ENCODE measurements at regions of chr17 and their contacts with region 1.

Region 1: DNA sequence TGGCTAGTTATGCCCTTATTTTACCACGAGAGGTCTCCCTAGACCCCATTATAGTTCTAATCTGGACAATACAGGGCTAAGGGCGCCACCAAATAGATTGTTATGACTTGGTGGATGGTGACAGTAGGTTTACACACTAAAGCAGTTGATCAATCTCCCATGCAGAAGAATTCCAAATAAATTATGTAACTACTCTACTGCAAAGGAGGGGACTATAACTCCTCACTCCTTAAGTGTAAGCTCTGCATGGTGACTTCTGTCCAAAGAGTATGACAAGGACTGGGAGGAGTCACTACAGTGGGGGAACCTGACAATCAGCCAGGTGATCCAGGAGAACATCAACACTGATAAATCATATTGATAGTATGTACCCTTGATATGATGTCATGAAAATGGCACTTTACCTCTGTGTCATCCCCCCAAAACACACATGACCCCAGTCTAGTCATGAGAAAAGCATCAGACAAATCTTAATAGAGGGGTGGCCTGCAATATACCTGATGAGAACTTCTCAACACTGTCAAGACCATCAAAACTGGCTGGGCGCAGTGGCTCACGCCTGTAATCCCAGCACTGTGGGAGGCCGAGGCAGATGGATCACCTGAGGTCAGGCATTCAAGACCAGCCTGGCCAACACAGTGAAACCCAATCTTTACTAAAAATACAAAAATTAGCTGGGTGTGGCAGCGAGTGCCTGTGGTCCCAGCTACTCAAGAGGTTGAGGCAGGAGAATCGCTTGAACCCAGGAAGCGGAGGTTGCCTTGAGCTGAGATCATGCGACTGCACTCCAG is 20.1 kb upstream of the YPEL2 start:
- DNase-seq: no peak
- H3K4me3 ChIP-seq: no peak overlapping the region
- H3K27ac ChIP-seq: no peak overlapping the region
- H3K4me1 ChIP-seq: peaks cover 0 to 10% (median 5%) of the 10 kb centered on the region in 6 donors
- H3K27me3 ChIP-seq: no peaks in the 10 kb centered on the region
- CTCF ChIP-seq: peak in 10 of 11 experiments; percentile 11 to 96 (median 90)
- POLR2A ChIP-seq: no peak

Region 2: DNA sequence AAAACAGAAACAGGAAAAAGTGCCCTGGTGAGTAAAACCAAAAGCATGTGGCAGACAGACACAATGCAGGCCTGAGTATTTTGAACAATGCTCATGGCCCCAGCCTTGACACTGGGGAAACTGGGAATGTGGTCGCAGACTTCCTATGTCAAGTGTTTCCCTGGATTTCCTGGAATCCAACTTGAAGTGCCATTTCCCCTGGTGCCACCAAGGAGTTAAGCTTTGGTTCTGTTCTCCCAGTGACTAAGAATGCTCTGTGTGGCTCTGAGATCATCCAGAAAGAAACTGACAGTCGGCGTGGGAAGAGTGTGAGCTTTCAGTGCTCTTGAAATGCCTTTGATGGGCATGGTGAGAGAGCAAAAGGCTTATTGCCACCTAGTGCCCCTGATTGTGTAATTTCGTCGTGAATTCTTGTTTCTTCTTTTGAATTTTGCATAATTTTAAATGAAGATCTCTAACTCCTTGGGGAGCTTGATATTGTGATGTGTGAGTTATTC is 116.1 kb after region 1 on chr17:
- intact Hi-C with region 1: no loop called
- DNase-seq: no peak
- H3K4me3 ChIP-seq: no peak overlapping the region
- H3K27ac ChIP-seq: peak overlapping the region in 7 of 8 donors; percentile 61 to 72 (median 70)
- H3K4me1 ChIP-seq: peaks cover 10 to 68% (median 35%) of the 10 kb centered on the region in 6 donors
- H3K27me3 ChIP-seq: no peaks in the 10 kb centered on the region
- CTCF ChIP-seq: no peak
- POLR2A ChIP-seq: no peak

Region 3: DNA sequence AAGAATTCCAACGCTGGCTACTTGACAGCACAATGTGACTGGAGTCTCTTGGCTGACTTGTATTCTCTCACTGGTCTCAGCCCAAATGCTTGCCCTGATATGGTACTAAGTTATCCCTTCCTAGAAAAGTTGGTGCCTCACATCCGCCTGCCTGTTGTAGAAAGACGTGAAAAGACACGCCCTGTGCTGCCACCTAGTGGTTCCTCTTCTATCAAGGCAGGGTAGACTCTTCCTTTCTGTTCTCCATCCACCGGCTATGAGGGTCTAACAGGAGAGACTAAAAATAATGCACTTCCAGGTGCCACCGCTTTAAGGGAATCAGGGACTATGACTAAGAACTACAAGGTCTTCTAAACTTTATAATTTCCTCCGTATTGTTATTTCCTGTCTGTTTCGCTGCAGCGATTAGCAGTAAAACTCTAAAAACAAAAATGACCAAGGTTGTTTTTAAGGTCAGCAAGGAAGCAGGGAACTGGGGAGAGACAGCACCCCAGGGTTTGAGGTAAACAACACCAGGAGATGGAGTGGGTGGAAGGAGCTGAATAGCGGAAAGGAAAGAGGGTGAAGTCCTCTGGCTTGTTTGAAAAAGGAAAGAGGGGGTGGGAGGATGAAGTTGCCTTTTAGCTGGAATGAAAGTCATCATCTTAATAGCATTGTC is 129.6 kb after region 1 on chr17:
- intact Hi-C with region 1: loop called (anchors 5 kb)
- DNase-seq: peak; percentile 91
- H3K4me3 ChIP-seq: peak overlapping the region in 2 of 8 donors; percentile 15 to 43
- H3K27ac ChIP-seq: peak overlapping the region in 7 of 8 donors; percentile 40 to 76 (median 72)
- H3K4me1 ChIP-seq: peaks cover 18 to 73% (median 46%) of the 10 kb centered on the region in 6 donors
- H3K27me3 ChIP-seq: no peaks in the 10 kb centered on the region
- CTCF ChIP-seq: peak; percentile 80 to 95 (median 87)
- POLR2A ChIP-seq: no peak

Region 4: GRCh38 chr17:59521204-59522126 is 210.1 kb after region 1 on chr17:
- intact Hi-C with region 1: loop called (anchors 10 kb)
- DNase-seq: peak; percentile 79
- H3K4me3 ChIP-seq: no peak overlapping the region
- H3K27ac ChIP-seq: peak overlapping the region in 5 of 8 donors; percentile 17 to 53 (median 32)
- H3K4me1 ChIP-seq: peaks cover 4 to 9% (median 8%) of the 10 kb centered on the region in 6 donors
- H3K27me3 ChIP-seq: no peaks in the 10 kb centered on the region
- CTCF ChIP-seq: peak; percentile 69 to 91 (median 88)
- POLR2A ChIP-seq: no peak

Region 5: GRCh38 chr17:59565171-59565969 is 254.0 kb after region 1 on chr17 and contains the start of gene DHX40:
- intact Hi-C with region 1: loop called (anchors 10 kb)
- DNase-seq: peak; percentile 98
- H3K4me3 ChIP-seq: peak within 1 kb of the TSS; percentile 73 to 95 (median 86)
- H3K27ac ChIP-seq: peak within 1 kb of the TSS; percentile 68 to 90 (median 86)
- H3K4me1 ChIP-seq: peaks cover 9 to 33% (median 17%) of the 10 kb centered on the region in 6 donors
- H3K27me3 ChIP-seq: no peaks in the 10 kb centered on the region
- CTCF ChIP-seq: no peak
- POLR2A ChIP-seq: peak in 1 of 3 donors; percentile 24
- total RNA-seq, gene DHX40: 22.0 to 33.5 (median 28.1) TPM

Measured in spleen (tissue), 13 donors.